Caco-2 (cell line): ENCODE measurements at regions of chr3 and their contacts with region 1.

Region 1: GRCh38 chr3:122858373-122858772 is 63.5 kb downstream of the SLC49A4 start:
- DNase-seq: peak in 1 of 2 experiments; percentile 12
- H3K4me3 ChIP-seq: no peak overlapping the region
- H3K4me3 Mint-ChIP-seq: no peak overlapping the region
- H3K27ac Mint-ChIP-seq: no peak overlapping the region
- H3K4me1 ChIP-seq: no peaks in the 10 kb centered on the region
- H3K4me1 Mint-ChIP-seq: peaks cover 19% of the 10 kb centered on the region
- H3K27me3 ChIP-seq: no peaks in the 10 kb centered on the region
- H3K27me3 Mint-ChIP-seq: no peaks in the 10 kb centered on the region
- CTCF ChIP-seq: peak; percentile 33 to 42

Region 2: DNA sequence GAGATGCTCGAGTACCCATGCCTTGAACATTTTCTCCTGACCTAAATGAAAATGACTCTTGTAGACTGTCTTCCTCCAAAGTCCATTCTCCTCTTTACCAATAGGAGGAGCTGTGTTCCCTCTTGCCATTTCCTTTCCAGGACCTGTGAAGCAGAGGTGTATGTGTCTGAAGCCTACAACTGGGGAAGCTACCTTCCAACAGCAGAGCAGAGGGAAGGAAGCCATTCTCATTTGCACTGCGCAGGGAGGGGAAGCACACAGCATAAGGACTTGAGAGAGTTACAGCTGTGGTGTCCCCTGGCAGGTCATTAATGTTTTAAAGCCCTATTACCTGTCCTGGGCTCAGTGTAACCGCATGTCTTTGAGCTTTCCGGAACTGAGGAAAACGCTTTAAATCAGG is 103.4 kb before region 1 on chr3:
- CTCF ChIA-PET with region 1: interaction called, 6 read pairs
- POLR2A ChIA-PET with region 1: no interaction called
- intact Hi-C with region 1: loop called (anchors 10 kb)
- DNase-seq: peak; percentile 71 to 76
- H3K4me3 ChIP-seq: no peak overlapping the region
- H3K4me3 Mint-ChIP-seq: peak overlapping the region; percentile 43
- H3K27ac Mint-ChIP-seq: peak overlapping the region; percentile 93
- H3K4me1 ChIP-seq: peaks cover 43% of the 10 kb centered on the region
- H3K4me1 Mint-ChIP-seq: peaks cover 35% of the 10 kb centered on the region
- H3K27me3 ChIP-seq: no peaks in the 10 kb centered on the region
- H3K27me3 Mint-ChIP-seq: no peaks in the 10 kb centered on the region
- CTCF ChIP-seq: peak; percentile 75 to 82

Region 3: DNA sequence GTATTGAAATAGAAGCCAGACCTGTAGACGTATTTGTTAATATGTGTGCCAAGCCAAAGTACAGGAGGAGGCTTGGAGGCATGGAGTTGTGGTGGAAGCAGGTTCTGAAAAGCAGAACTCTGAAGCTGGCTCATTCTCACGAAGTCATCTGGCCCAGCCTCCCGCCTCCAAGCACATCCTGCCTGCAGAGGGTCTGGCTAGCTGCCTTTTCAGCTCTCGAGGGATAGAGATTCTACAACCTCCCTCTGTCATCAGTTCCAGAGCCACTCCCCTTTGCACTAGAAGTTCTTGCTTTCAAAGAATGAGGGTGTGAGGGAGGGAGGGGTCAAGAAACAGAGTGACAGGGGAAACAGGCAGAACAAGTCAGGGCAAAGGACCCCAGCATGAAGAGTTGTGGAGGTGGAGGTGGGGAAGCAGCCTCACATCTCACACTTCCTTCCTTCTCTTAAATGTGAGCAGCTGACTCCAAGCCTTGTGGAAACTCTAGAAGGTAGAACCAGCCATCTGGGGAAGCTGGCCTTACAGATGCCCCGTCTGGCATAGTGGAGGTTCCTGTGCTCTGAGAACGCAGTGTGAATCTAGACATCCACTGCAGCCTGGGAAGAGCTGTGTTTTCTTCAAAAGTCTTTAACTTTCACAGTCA is 31.8 kb after region 1 on chr3:
- CTCF ChIA-PET with region 1: no interaction called
- POLR2A ChIA-PET with region 1: no interaction called
- intact Hi-C with region 1: loop called (anchors 1 kb)
- DNase-seq: peak; percentile 48 to 54
- H3K4me3 ChIP-seq: no peak overlapping the region
- H3K4me3 Mint-ChIP-seq: no peak overlapping the region
- H3K27ac Mint-ChIP-seq: no peak overlapping the region
- H3K4me1 ChIP-seq: peaks cover 13% of the 10 kb centered on the region
- H3K4me1 Mint-ChIP-seq: peaks cover 13% of the 10 kb centered on the region
- H3K27me3 ChIP-seq: no peaks in the 10 kb centered on the region
- H3K27me3 Mint-ChIP-seq: no peaks in the 10 kb centered on the region
- CTCF ChIP-seq: no peak

Region 4: DNA sequence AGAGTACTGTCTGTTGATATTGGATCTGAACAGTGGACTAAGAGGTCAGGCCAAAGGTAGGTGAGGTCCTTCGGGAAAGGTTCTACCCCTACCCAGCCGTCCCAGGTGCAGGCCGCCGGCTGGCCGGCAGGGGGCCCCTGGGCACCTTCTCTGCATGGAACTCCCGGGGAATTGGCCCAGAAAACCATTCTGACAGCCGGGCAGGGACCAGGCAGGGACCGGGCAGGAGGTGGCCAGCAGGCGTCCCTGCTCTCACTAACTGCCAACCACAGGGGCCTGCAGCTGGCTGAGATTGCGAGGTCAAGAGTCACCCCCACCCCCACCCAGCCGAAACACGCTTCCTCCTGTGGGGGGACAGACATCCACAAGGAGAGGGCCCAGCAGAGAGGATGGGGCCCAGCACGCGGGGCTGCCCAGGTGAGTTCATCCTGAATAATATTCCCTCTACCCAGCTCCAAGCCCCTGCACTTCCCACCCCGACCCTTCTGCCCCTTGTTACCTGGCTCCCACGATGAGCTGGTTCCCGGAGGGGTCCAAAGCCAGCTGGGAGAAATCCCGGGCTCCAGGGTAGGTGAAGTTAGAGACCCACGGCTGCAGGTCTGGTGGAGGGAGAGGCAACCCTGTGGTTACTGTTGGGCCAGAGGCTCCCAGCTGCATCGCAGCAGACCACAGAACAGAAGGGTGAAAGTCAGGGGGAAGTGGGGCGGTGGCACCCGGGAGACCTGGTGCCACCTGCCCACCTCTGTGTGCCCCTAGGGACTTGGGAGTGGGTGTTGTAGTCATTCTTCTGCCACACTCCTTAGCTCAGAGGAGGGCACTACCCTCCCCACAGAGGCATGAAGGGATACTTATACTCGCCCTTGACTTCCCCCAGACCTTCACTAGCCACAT is 84.8 kb after region 1 on chr3:
- CTCF ChIA-PET with region 1: no interaction called
- POLR2A ChIA-PET with region 1: no interaction called
- intact Hi-C with region 1: loop called (anchors 10 kb)
- DNase-seq: peak; percentile 68 to 85
- H3K4me3 ChIP-seq: no peak overlapping the region
- H3K4me3 Mint-ChIP-seq: no peak overlapping the region
- H3K27ac Mint-ChIP-seq: peak overlapping the region; percentile 16
- H3K4me1 ChIP-seq: no peaks in the 10 kb centered on the region; the same call in 1 of the 2 replicates
- H3K4me1 Mint-ChIP-seq: peaks cover 7% of the 10 kb centered on the region
- H3K27me3 ChIP-seq: no peaks in the 10 kb centered on the region
- H3K27me3 Mint-ChIP-seq: no peaks in the 10 kb centered on the region
- CTCF ChIP-seq: peak; percentile 77 to 92

Region 5: DNA sequence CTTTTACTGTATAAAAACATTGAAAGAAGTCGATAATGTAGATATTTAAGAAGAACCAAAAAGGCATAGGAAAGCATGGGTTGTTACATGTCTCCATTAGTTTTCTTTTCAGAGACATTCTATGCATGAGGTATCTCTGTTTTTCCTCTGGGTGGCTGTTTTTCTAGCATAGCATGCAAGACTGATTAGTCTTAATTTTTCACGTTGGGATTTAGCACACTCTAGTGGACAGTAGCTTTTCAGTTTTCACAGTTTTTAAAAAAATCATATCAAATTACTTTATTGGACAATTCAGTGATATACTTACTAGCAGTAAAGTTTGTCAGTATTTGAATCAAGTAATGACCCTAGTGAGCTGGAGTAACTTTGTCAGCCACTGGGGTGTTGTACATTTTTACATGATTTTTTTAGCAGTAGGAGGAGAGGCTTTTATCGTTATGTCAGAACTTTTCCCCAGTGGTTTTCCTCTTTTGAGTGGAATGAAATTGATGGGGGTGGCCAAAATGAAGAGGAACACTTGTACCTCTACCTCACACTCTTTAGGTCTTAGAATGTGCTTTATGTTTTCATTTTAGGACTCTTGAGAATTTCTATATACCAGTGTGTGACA is 400.5 kb after region 1 on chr3:
- CTCF ChIA-PET with region 1: no interaction called
- POLR2A ChIA-PET with region 1: no interaction called
- intact Hi-C with region 1: loop called (anchors 5 kb)
- DNase-seq: peak in 1 of 2 experiments; percentile 31
- H3K4me3 ChIP-seq: no peak overlapping the region
- H3K4me3 Mint-ChIP-seq: no peak overlapping the region
- H3K27ac Mint-ChIP-seq: no peak overlapping the region
- H3K4me1 ChIP-seq: no peaks in the 10 kb centered on the region
- H3K4me1 Mint-ChIP-seq: no peaks in the 10 kb centered on the region
- H3K27me3 ChIP-seq: no peaks in the 10 kb centered on the region
- H3K27me3 Mint-ChIP-seq: no peaks in the 10 kb centered on the region
- CTCF ChIP-seq: peak; percentile 47 to 52